PC-9 (cell line): ENCODE measurements at regions of chr2 and their contacts with region 1.

Region 1: GRCh38 chr2:98634401-98635092 is 26.2 kb downstream of the UNC50 start:
- DNase-seq: no peak
- H3K4me3 ChIP-seq: no peak overlapping the region
- H3K27ac ChIP-seq: no peak overlapping the region
- H3K4me1 ChIP-seq: no peaks in the 10 kb centered on the region
- H3K27me3 ChIP-seq: no peaks in the 10 kb centered on the region
- CTCF ChIP-seq: peak; percentile 47

Region 2: DNA sequence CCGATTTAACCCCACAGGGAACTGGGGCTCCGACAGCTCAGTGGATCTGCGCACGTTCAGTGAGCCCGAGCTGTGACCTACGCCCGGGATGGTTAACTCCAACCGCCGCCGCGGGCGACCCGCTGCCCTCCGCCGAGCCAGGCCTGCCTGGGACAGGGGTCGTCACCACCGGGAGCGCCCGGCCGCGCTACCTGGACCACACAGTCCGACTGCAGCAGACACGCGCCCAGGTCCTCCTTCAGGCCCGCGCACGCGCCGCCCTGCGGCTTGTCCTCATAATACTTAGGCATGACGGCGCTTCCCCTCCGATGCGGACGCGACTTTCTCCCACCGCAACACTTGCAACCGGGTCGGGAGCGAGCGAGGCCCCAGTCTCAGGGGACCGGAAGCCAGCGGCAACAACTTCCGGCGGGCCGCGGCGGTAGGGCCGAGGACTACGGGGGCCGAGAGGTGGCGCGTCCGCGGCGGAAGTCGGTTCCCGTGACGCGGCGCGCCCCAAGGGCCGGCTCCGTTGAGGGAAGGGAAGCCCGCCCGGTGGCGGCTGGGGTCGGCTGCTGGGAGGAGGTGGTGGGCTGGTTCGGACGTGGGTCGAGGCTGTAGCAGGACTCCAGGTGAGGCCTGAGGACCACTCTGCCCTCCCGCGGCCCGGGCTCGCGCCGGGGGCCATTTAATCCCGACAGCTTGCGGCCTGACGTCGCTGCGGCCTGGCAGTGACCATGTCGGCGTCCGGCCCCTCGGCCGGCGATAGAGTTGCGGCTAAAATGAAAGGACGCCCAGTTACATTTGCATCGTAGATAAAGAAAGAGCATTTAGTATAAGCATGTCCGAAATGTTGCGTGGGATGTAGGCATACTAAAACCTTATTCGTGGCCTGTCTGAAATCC is 26.2 kb before region 1 on chr2 and contains the starts of genes COA5 and UNC50:
- CTCF ChIA-PET with region 1: no interaction called
- POLR2A ChIA-PET with region 1: no interaction called
- intact Hi-C with region 1: no loop called
- DNase-seq: peak; percentile 83 to 91
- H3K4me3 ChIP-seq: peak within 1 kb of the TSS; percentile 77
- H3K27ac ChIP-seq: peak within 1 kb of the TSS; percentile 70
- H3K4me1 ChIP-seq: peaks cover 25% of the 10 kb centered on the region
- H3K27me3 ChIP-seq: no peaks in the 10 kb centered on the region
- CTCF ChIP-seq: peak; percentile 1
- total RNA-seq, gene COA5: 37.5 and 43.6 TPM in 2 replicates
- total RNA-seq, gene UNC50: 38.1 and 46.0 TPM in 2 replicates

Region 3: GRCh38 chr2:98623657-98624056 is 10.9 kb before region 1 on chr2:
- CTCF ChIA-PET with region 1: no interaction called
- POLR2A ChIA-PET with region 1: interaction called, 10 read pairs
- intact Hi-C with region 1: no loop called
- DNase-seq: no peak
- H3K4me3 ChIP-seq: no peak overlapping the region
- H3K27ac ChIP-seq: no peak overlapping the region
- H3K4me1 ChIP-seq: no peaks in the 10 kb centered on the region
- H3K27me3 ChIP-seq: no peaks in the 10 kb centered on the region
- CTCF ChIP-seq: no peak